ENCODE measurements at regions of chr1 and their contacts with region 1.

Region 1: DNA sequence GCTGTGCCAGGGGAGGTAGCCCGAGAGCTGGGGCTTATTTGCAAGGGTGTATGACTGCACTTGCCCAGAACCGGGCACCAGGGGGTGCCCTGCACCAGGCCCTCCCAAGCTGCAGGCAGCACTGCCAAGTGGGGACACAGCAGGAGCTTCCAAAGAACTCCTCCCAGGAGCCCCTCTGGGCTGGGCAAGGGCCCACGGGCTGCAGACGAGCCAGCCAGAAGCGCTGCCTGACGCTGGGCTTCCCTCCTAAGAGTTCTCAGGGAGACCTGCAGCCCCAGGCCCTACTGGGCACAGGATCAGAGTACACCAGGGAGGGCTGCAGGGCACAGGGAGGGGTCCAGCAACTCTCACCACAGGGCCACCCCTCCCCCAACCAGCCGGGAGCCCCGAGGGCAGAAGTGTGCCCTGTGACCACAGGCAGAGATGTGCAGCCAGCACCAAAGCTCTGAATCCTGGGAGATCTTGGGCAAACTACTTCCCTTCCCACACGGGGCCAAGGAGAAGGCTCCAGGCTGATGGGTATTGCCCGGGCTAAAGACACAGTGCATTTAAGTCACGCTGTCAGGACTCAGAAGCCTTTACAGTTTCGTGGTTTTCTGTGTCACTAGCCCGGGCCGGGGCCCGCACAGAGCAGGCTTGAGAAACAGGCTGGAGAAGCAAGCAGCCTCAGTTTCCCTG is 63.4 kb downstream of the KCNAB2 start:
- DNase-seq: peak; percentile 39
- H3K4me3 ChIP-seq: no peak overlapping the region
- H3K27ac ChIP-seq: no peak overlapping the region
- H3K4me1 ChIP-seq: no peaks in the 10 kb centered on the region
- H3K27me3 ChIP-seq: no peaks in the 10 kb centered on the region
- CTCF ChIP-seq: peak; percentile 35 to 77
- POLR2A ChIP-seq: no peak

Region 2: DNA sequence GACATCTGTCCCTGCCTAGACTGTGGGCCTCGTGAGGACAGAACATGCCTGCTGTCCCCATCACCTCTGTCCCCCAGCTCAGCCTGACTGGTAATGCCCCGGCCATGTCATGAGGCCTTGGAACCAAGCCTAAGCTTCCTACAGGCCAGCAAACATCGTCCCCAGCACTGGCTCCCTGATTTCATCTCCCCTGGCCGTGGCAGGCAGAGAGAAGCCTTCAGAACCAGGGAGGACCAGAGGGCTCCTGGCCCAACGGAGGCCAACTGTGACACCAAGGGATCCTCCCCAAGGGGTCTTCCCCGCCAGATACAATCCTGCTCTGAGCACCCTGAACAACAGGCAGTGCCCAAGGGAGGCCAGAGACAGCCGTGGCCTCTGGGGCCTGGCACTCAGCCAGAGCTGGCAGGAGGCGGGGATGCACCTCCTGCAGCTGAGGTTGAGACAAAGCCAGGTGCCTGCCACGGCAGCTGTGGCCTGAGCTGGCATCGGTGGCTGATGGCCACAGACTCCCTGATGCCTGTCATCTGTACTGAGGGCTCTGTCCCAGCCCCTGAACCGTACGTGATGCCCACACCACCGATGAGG is 107.0 kb before region 1 on chr1:
- CTCF ChIA-PET with region 1: no interaction called
- POLR2A ChIA-PET with region 1: no interaction called
- dilution Hi-C with region 1: no loop called
- intact Hi-C with region 1: no loop called
- DNase-seq: no peak
- H3K4me3 ChIP-seq: no peak overlapping the region
- H3K27ac ChIP-seq: no peak overlapping the region
- H3K4me1 ChIP-seq: no peaks in the 10 kb centered on the region
- H3K27me3 ChIP-seq: no peaks in the 10 kb centered on the region
- CTCF ChIP-seq: no peak
- POLR2A ChIP-seq: no peak

Region 3: GRCh38 chr1:6171548-6172119 is 62.6 kb after region 1 on chr1:
- CTCF ChIA-PET with region 1: interaction called, 3 read pairs
- POLR2A ChIA-PET with region 1: no interaction called
- dilution Hi-C with region 1: no loop called
- intact Hi-C with region 1: loop called (anchors 1 kb)
- DNase-seq: peak; percentile 14
- H3K4me3 ChIP-seq: no peak overlapping the region
- H3K27ac ChIP-seq: no peak overlapping the region
- H3K4me1 ChIP-seq: no peaks in the 10 kb centered on the region
- H3K27me3 ChIP-seq: no peaks in the 10 kb centered on the region
- CTCF ChIP-seq: peak; percentile 17 to 49
- POLR2A ChIP-seq: no peak

Region 4: GRCh38 chr1:6185635-6186382 is 76.7 kb after region 1 on chr1:
- CTCF ChIA-PET with region 1: interaction called, 10 read pairs
- POLR2A ChIA-PET with region 1: no interaction called
- dilution Hi-C with region 1: no loop called
- intact Hi-C with region 1: loop called (anchors 1 kb)
- DNase-seq: peak; percentile 26
- H3K4me3 ChIP-seq: no peak overlapping the region
- H3K27ac ChIP-seq: no peak overlapping the region
- H3K4me1 ChIP-seq: no peaks in the 10 kb centered on the region
- H3K27me3 ChIP-seq: peaks cover 10 to 11% of the 10 kb centered on the region in 2 experiments
- CTCF ChIP-seq: peak; percentile 43 to 44
- POLR2A ChIP-seq: no peak

Region 5: DNA sequence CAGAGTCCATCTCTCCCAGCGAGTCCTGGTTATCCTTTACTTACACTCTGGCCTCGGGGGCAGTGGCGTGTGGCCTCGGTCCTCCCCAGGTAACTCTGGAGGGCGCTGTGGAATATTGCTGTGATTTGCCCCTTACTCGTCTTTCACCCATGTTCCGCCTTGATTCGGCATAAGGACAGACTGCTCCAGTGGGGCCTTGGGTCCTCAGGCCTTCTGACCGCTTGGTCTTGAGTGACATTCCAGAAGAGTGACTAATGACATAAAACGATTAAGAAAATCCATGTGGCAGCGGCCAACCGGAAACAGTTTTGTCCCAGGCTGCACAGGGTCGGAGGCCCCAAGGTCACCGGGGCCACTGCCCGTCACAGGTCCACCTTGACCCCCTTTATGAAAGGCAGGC is 115.6 kb after region 1 on chr1:
- CTCF ChIA-PET with region 1: no interaction called
- POLR2A ChIA-PET with region 1: no interaction called
- dilution Hi-C with region 1: no loop called
- intact Hi-C with region 1: no loop called
- DNase-seq: no peak
- H3K4me3 ChIP-seq: no peak overlapping the region
- H3K27ac ChIP-seq: no peak overlapping the region
- H3K4me1 ChIP-seq: no peaks in the 10 kb centered on the region
- H3K27me3 ChIP-seq: no peaks in the 10 kb centered on the region
- CTCF ChIP-seq: no peak
- POLR2A ChIP-seq: no peak

Measured in endothelial cell of umbilical vein (primary cell).